ENCODE measurements at regions of chr7 and their contacts with region 1.

Region 1: GRCh38 chr7:134632937-134633540 is 13.6 kb upstream of the BPGM start:
- DNase-seq: peak in 11 of 14 experiments; percentile 7 to 82 (median 40)
- ATAC-seq: peak; percentile 97
- H3K4me3 ChIP-seq: no peak overlapping the region
- H3K4me3 Mint-ChIP-seq: no peak overlapping the region
- H3K27ac ChIP-seq: no peak overlapping the region
- H3K27ac Mint-ChIP-seq: no peak overlapping the region
- H3K4me1 ChIP-seq: peaks cover 6% of the 10 kb centered on the region
- H3K4me1 Mint-ChIP-seq: peaks cover 23% of the 10 kb centered on the region
- H3K27me3 ChIP-seq: peaks cover 3 to 5% of the 10 kb centered on the region in 2 experiments
- H3K27me3 Mint-ChIP-seq: peaks cover 11% of the 10 kb centered on the region
- CTCF ChIP-seq: peak; percentile 80

Region 2: DNA sequence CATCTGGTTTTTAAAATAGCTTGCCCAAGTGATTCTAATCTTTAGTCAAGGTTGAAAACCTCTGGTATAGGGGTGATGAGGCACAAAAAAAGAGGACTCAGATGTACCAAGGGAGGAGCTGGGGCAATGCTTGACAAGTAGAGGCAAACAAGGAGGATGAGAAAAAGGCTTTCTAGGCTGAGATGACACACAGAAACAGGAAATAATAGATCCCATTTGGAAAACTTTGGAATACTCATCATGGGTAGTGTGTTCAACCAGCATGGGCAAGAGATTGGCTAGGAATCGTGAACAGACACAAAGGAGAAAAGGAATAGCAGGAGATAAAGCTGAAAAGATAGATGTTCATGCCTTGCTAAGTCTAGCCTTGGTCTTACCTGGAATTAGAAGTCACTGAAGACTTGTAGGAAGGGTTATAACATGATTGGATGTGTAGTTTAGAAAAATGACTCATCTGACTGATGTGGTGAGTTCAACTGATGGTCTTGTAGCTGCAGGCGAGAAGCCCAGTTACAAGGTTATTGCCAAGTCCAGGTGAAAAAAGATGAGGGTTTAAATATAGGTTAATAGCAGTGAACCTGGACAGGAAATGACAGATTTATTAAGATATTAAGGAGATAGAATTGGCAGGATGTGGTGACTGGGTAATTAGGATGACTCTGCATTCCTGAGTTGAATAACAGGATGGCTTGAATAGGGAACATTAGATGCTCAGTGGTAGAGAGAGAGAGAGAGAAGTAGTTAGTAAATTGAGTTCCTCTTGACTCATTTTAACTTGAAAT is 719.9 kb before region 1 on chr7:
- CTCF ChIA-PET with region 1: no interaction called
- POLR2A ChIA-PET with region 1: no interaction called
- intact Hi-C with region 1: no loop called
- DNase-seq: no peak
- ATAC-seq: no peak
- H3K4me3 ChIP-seq: no peak overlapping the region
- H3K4me3 Mint-ChIP-seq: no peak overlapping the region
- H3K27ac ChIP-seq: no peak overlapping the region
- H3K27ac Mint-ChIP-seq: no peak overlapping the region
- H3K4me1 ChIP-seq: no peaks in the 10 kb centered on the region
- H3K4me1 Mint-ChIP-seq: no peaks in the 10 kb centered on the region
- H3K27me3 ChIP-seq: no peaks in the 10 kb centered on the region
- H3K27me3 Mint-ChIP-seq: no peaks in the 10 kb centered on the region
- CTCF ChIP-seq: no peak

Region 3: GRCh38 chr7:134669845-134670373 is 36.9 kb after region 1 on chr7:
- CTCF ChIA-PET with region 1: interaction called, 14 read pairs
- POLR2A ChIA-PET with region 1: interaction called, 6 read pairs
- intact Hi-C with region 1: loop called in 1 of 2 experiments (anchors 1 kb)
- DNase-seq: peak; percentile 77 to 96 (median 88)
- ATAC-seq: peak; percentile 93
- H3K4me3 ChIP-seq: peak overlapping the region; percentile 24
- H3K4me3 Mint-ChIP-seq: peak overlapping the region; percentile 85
- H3K27ac ChIP-seq: peak overlapping the region; percentile 74 to 87
- H3K27ac Mint-ChIP-seq: peak overlapping the region; percentile 89
- H3K4me1 ChIP-seq: peaks cover 18% of the 10 kb centered on the region
- H3K4me1 Mint-ChIP-seq: peaks cover 61% of the 10 kb centered on the region
- H3K27me3 ChIP-seq: no peaks in the 10 kb centered on the region
- H3K27me3 Mint-ChIP-seq: no peaks in the 10 kb centered on the region
- CTCF ChIP-seq: no peak

Region 4: DNA sequence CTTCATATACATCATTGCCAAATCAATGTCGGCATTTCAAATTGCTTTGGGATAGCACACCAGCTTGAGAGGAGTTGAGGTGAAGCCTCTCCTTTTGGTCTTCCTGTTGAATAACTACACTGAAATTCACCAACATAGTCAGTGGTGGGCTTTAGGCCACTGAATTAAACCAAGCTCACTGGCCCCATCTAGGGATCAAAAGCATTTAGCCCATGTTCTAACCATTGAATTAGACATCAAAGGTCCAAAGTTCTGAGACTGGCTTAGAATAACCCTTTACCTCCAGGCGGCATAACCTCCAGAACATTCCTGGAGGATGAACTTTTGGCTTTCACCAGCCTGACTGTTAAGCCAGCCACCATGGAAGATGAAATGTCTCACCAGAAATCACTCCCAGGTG is 68.2 kb after region 1 on chr7:
- CTCF ChIA-PET with region 1: interaction called, 30 read pairs
- POLR2A ChIA-PET with region 1: interaction called, 10 read pairs
- intact Hi-C with region 1: loop called (anchors 1 kb)
- DNase-seq: peak in 9 of 14 experiments; percentile 5 to 63 (median 24)
- ATAC-seq: peak; percentile 73
- H3K4me3 ChIP-seq: no peak overlapping the region
- H3K4me3 Mint-ChIP-seq: no peak overlapping the region
- H3K27ac ChIP-seq: no peak overlapping the region
- H3K27ac Mint-ChIP-seq: no peak overlapping the region
- H3K4me1 ChIP-seq: no peaks in the 10 kb centered on the region
- H3K4me1 Mint-ChIP-seq: no peaks in the 10 kb centered on the region
- H3K27me3 ChIP-seq: no peaks in the 10 kb centered on the region
- H3K27me3 Mint-ChIP-seq: no peaks in the 10 kb centered on the region
- CTCF ChIP-seq: peak; percentile 59

Region 5: DNA sequence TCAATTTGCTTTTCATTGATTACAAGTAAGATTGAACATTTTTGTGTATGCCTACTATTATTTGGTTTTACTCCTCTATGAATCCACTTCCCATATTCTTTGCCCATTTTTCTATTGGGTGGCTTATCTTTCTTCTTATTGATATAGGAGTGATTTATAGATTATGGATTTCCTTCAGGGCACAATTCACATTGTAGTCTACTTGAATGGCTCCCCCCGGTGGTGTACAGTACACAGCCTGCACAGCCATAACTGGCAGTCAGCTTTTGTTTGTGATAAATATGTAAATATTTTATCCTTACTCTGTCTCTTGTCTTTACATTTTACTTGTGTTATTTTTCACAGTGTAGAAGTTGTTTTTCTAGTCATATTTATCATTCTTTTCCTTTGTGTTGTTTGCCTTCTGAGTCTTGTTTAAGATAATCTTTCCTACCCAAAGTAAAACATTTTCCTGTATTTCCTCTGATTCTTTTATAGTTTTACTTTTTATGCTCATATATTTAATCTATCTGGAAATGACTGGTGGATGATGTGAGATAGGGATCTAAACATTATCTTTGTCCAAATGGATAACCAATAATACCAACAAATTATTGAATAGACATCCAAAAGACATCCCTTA is 122.5 kb after region 1 on chr7:
- CTCF ChIA-PET with region 1: interaction called, 20 read pairs
- POLR2A ChIA-PET with region 1: no interaction called
- intact Hi-C with region 1: loop called (anchors 1 kb)
- DNase-seq: peak; percentile 9 to 65 (median 25)
- ATAC-seq: no peak
- H3K4me3 ChIP-seq: no peak overlapping the region
- H3K4me3 Mint-ChIP-seq: no peak overlapping the region
- H3K27ac ChIP-seq: no peak overlapping the region
- H3K27ac Mint-ChIP-seq: no peak overlapping the region
- H3K4me1 ChIP-seq: no peaks in the 10 kb centered on the region
- H3K4me1 Mint-ChIP-seq: peaks cover 6% of the 10 kb centered on the region
- H3K27me3 ChIP-seq: no peaks in the 10 kb centered on the region
- H3K27me3 Mint-ChIP-seq: no peaks in the 10 kb centered on the region
- CTCF ChIP-seq: peak; percentile 54

Region 6: GRCh38 chr7:134804351-134804750 is 171.3 kb after region 1 on chr7:
- CTCF ChIA-PET with region 1: no interaction called
- POLR2A ChIA-PET with region 1: no interaction called
- intact Hi-C with region 1: no loop called
- DNase-seq: no peak
- ATAC-seq: no peak
- H3K4me3 ChIP-seq: no peak overlapping the region
- H3K4me3 Mint-ChIP-seq: no peak overlapping the region
- H3K27ac ChIP-seq: no peak overlapping the region
- H3K27ac Mint-ChIP-seq: no peak overlapping the region
- H3K4me1 ChIP-seq: no peaks in the 10 kb centered on the region
- H3K4me1 Mint-ChIP-seq: no peaks in the 10 kb centered on the region
- H3K27me3 ChIP-seq: no peaks in the 10 kb centered on the region
- H3K27me3 Mint-ChIP-seq: no peaks in the 10 kb centered on the region
- CTCF ChIP-seq: no peak

Region 7: GRCh38 chr7:134954197-134955082 is 321.4 kb after region 1 on chr7:
- CTCF ChIA-PET with region 1: no interaction called
- POLR2A ChIA-PET with region 1: interaction called, 3 read pairs
- intact Hi-C with region 1: loop called (anchors 1 kb)
- DNase-seq: peak in 4 of 14 experiments; percentile 15 to 62 (median 51)
- ATAC-seq: peak; percentile 49
- H3K4me3 ChIP-seq: no peak overlapping the region
- H3K4me3 Mint-ChIP-seq: no peak overlapping the region
- H3K27ac ChIP-seq: no peak overlapping the region
- H3K27ac Mint-ChIP-seq: no peak overlapping the region
- H3K4me1 ChIP-seq: no peaks in the 10 kb centered on the region
- H3K4me1 Mint-ChIP-seq: no peaks in the 10 kb centered on the region
- H3K27me3 ChIP-seq: no peaks in the 10 kb centered on the region
- H3K27me3 Mint-ChIP-seq: no peaks in the 10 kb centered on the region
- CTCF ChIP-seq: peak; percentile 77